CD4-positive, alpha-beta memory T cell (primary cell): ENCODE measurements at regions of chr9 and their contacts with region 1.

Region 1: GRCh38 chr9:127970401-127971313 is 10.1 kb downstream of the EEIG1 start:
- DNase-seq: peak; percentile 72 to 89 (median 73)
- H3K4me3 ChIP-seq: peak overlapping the region; percentile 61 to 76
- H3K4me3 Mint-ChIP-seq: peak overlapping the region; percentile 78 to 98 (median 93)
- H3K27ac ChIP-seq: peak overlapping the region; percentile 78
- H3K27ac Mint-ChIP-seq: peak overlapping the region; percentile 81 to 99 (median 97)
- H3K4me1 ChIP-seq: peaks cover 100% of the 10 kb centered on the region
- H3K4me1 Mint-ChIP-seq: peaks cover 73 to 100% (median 87%) of the 10 kb centered on the region in 4 donors
- H3K27me3 ChIP-seq: no peaks in the 10 kb centered on the region
- H3K27me3 Mint-ChIP-seq: no peaks in the 10 kb centered on the region

Region 2: DNA sequence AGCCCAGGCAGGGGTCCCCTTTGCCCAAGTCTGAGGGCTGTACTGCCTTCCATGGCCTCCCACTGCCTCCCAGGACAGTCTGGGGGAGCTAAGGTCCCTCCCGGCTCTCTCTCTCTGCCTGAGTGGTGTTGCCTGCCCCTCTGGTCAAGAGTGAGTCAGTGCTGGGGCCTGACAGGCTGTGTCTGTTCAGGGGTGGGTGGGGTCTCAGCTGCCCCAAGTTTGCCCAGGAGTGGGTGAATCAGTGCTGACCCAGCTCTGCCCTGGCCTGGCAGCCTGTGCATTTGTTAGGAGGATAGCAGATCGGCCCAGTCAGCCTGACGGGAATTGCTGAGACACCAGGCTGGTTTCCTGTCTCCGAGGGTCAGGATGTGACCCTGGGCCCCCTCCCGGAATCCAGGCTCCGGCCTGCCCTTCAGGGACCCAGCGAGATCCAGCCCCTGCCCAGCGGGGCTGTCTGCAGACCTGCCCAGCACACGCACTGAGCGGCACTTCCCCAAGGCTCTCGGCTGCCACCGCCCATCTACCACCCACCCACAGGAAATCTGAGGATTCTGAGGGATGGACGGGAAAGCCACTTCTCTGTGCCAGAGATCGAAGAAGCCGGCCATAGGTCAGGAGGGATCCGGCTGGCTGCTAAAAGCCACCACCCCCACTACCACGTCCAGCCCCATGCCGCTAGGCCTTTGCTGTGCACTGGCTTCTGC is 132.1 kb before region 1 on chr9:
- CTCF ChIA-PET with region 1: no interaction called
- POLR2A ChIA-PET with region 1: no interaction called
- intact Hi-C with region 1: no loop called
- DNase-seq: no peak
- H3K4me3 ChIP-seq: no peak overlapping the region
- H3K4me3 Mint-ChIP-seq: peak overlapping the region in 1 of 8 donors; percentile 20
- H3K27ac ChIP-seq: no peak overlapping the region
- H3K27ac Mint-ChIP-seq: no peak overlapping the region
- H3K4me1 ChIP-seq: no peaks in the 10 kb centered on the region
- H3K4me1 Mint-ChIP-seq: no peaks in the 10 kb centered on the region
- H3K27me3 ChIP-seq: no peaks in the 10 kb centered on the region
- H3K27me3 Mint-ChIP-seq: no peaks in the 10 kb centered on the region

Region 3: GRCh38 chr9:127937388-127938280 is 33.0 kb before region 1 on chr9 and contains the start of gene DPM2:
- CTCF ChIA-PET with region 1: interaction called, 35 read pairs
- POLR2A ChIA-PET with region 1: interaction called, 250 read pairs
- intact Hi-C with region 1: loop called (anchors 5 kb)
- DNase-seq: peak; percentile 85 to 89 (median 87)
- H3K4me3 ChIP-seq: peak within 1 kb of the TSS; percentile 37 to 73
- H3K4me3 Mint-ChIP-seq: peak within 1 kb of the TSS; percentile 88 to 98 (median 91)
- H3K27ac ChIP-seq: peak within 1 kb of the TSS; percentile 75
- H3K27ac Mint-ChIP-seq: peak within 1 kb of the TSS; percentile 89 to 97 (median 97)
- H3K4me1 ChIP-seq: peaks cover 37% of the 10 kb centered on the region
- H3K4me1 Mint-ChIP-seq: peaks cover 23 to 53% (median 41%) of the 10 kb centered on the region in 4 donors
- H3K27me3 ChIP-seq: no peaks in the 10 kb centered on the region
- H3K27me3 Mint-ChIP-seq: no peaks in the 10 kb centered on the region
- total RNA-seq, gene DPM2: 37.0 to 39.7 TPM